ENCODE measurements at regions of chr12 and their contacts with region 1.

Region 1: GRCh38 chr12:62603061-62603810 is 136.6 kb downstream of the MON2 start:
- DNase-seq: peak; percentile 84 to 92 (median 84)
- H3K4me3 ChIP-seq: peak overlapping the region; percentile 54 to 86 (median 58)
- H3K4me3 Mint-ChIP-seq: peak overlapping the region; percentile 89 to 94
- H3K27ac ChIP-seq: peak overlapping the region; percentile 99
- H3K27ac Mint-ChIP-seq: peak overlapping the region; percentile 99 to 100 (median 99)
- H3K4me1 ChIP-seq: peaks cover 16 to 30% of the 10 kb centered on the region in 2 donors
- H3K4me1 Mint-ChIP-seq: peaks cover 37% of the 10 kb centered on the region
- H3K27me3 ChIP-seq: no peaks in the 10 kb centered on the region
- H3K27me3 Mint-ChIP-seq: peaks cover 0 to 2% (median 0%) of the 10 kb centered on the region in 3 donors
- CTCF ChIP-seq: peak; percentile 54

Region 2: GRCh38 chr12:62146318-62146717 is 456.9 kb before region 1 on chr12:
- intact Hi-C with region 1: no loop called
- DNase-seq: peak; percentile 64 to 75 (median 66)
- H3K4me3 ChIP-seq: no peak overlapping the region
- H3K4me3 Mint-ChIP-seq: no peak overlapping the region
- H3K27ac ChIP-seq: peak overlapping the region in 1 of 2 donors; percentile 21
- H3K27ac Mint-ChIP-seq: peak overlapping the region in 4 of 7 donors; percentile 51 to 81 (median 70)
- H3K4me1 ChIP-seq: peaks cover 11 to 12% of the 10 kb centered on the region in 2 donors
- H3K4me1 Mint-ChIP-seq: peaks cover 18% of the 10 kb centered on the region
- H3K27me3 ChIP-seq: no peaks in the 10 kb centered on the region
- H3K27me3 Mint-ChIP-seq: no peaks in the 10 kb centered on the region
- CTCF ChIP-seq: no peak

Region 3: DNA sequence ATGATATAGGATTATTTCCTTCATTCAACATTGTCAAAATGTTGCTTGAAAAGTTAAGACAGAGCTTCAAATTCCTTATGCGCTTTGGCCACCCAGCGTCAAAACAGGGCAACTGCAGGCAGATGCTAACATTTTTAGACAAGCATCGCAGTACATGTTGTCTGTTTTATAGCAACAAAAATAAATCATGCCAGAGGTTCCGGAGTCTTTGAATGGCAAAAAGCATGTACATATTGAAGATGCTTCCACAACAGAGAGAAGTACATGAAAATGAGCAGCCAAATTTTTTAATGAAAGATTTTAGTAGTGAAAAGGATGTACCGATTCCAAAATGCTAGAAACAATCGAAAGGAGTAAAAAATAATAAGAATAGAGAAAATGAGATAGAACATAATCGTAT is 392.8 kb before region 1 on chr12:
- intact Hi-C with region 1: loop called in 1 of 2 experiments (anchors 5 kb)
- DNase-seq: peak; percentile 50 to 61 (median 58)
- H3K4me3 ChIP-seq: peak overlapping the region in 1 of 3 experiments; percentile 52
- H3K4me3 Mint-ChIP-seq: peak overlapping the region in 1 of 2 donors; percentile 35
- H3K27ac ChIP-seq: peak overlapping the region in 1 of 2 donors; percentile 73
- H3K27ac Mint-ChIP-seq: peak overlapping the region; percentile 23 to 96 (median 93)
- H3K4me1 ChIP-seq: peaks cover 42 to 53% of the 10 kb centered on the region in 2 donors
- H3K4me1 Mint-ChIP-seq: peaks cover 53% of the 10 kb centered on the region
- H3K27me3 ChIP-seq: no peaks in the 10 kb centered on the region
- H3K27me3 Mint-ChIP-seq: no peaks in the 10 kb centered on the region
- CTCF ChIP-seq: peak; percentile 88

Region 4: DNA sequence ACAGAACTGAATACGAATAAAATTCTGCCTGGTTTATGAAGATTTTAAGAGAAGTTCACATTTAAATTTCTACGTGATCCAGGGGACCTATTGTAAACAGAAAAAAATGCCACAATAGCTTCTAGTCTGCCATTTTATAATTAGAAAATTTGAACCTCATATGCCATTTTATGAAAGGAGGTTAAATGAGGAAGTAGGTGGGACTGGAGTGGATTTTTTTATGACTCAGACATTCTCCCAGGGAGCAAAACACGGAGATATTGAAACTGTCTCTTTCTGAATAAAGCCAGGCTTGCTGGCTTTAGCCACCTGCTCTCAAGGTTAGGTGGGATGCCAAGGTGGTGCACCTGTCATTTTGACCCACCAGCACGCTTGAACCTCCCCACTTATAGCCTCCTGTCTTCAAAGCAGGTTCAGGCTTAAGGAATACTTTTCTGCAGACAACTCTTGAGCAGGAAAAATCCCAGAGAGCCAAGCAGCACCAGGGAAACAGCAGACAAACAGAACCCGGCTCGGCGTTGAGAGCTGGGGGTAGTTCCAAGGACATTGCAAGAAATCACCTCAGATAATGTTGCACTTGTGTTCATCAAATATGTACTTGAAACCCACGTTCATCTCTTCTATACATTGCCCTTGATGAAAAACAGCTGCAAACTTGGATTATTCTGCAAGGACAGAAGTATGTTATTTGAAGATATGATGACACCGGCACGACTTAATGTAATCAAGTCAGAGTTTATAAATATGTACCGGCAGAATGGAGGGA is 128.0 kb after region 1 on chr12:
- intact Hi-C with region 1: loop called in 1 of 2 experiments (anchors 5 kb)
- DNase-seq: peak; percentile 60 to 84 (median 80)
- H3K4me3 ChIP-seq: no peak overlapping the region
- H3K4me3 Mint-ChIP-seq: peak overlapping the region; percentile 43 to 59
- H3K27ac ChIP-seq: peak overlapping the region; percentile 10 to 71
- H3K27ac Mint-ChIP-seq: peak overlapping the region; percentile 78 to 96 (median 92)
- H3K4me1 ChIP-seq: peaks cover 44 to 61% of the 10 kb centered on the region in 2 donors
- H3K4me1 Mint-ChIP-seq: peaks cover 61% of the 10 kb centered on the region
- H3K27me3 ChIP-seq: no peaks in the 10 kb centered on the region
- H3K27me3 Mint-ChIP-seq: peaks cover 0 to 2% (median 0%) of the 10 kb centered on the region in 3 donors
- CTCF ChIP-seq: no peak

Region 5: DNA sequence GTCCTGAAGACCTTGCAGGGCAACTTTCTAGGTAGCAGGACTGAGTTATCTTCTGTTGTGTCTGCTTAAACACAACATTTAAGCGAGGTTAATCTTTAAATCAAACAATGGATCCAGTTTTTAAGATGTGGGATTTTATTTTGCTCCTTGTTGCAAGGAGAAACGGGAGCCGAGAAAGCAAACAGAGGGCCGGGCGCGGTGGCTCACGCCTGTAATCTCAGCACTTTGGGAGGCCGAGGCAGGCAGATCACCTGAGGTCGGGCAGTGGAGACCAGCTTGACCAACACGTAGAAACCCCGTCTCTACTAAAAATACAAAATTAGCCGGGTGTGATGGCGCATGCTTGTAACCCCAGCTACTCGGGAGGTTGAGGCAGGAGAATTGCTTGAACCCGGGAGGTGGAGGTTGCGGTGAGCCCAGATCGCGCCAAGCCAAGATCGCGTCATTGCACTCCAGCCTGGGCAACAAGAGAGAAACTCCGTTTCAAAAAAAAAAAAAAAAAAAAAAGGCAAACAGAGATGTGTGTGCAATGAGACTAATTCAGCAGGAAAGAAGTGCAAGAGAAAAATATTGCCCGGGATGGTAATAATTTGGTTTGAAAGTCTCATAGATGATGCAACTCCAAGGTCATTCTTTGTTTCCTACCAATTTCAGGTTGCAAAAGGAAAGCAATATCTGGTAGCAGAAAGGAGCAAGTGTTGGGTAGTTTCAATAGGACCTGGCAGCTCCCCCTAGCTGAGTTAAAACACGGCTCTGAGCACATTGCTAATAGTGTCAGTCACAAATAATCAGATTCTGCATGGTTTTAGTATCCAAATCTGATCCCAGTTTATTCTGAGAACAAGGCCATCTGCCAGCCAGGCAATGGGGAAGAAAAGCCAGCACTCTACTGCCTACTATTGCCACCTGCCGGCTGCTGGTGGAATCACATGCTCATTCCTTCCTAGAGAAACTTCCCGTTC is 190.3 kb after region 1 on chr12:
- intact Hi-C with region 1: loop called in 1 of 2 experiments (anchors 5 kb)
- DNase-seq: peak; percentile 66 to 85 (median 70)
- H3K4me3 ChIP-seq: no peak overlapping the region
- H3K4me3 Mint-ChIP-seq: no peak overlapping the region
- H3K27ac ChIP-seq: no peak overlapping the region
- H3K27ac Mint-ChIP-seq: no peak overlapping the region
- H3K4me1 ChIP-seq: peaks cover 13 to 20% of the 10 kb centered on the region in 2 donors
- H3K4me1 Mint-ChIP-seq: peaks cover 25% of the 10 kb centered on the region
- H3K27me3 ChIP-seq: no peaks in the 10 kb centered on the region
- H3K27me3 Mint-ChIP-seq: peaks cover 0 to 2% (median 0%) of the 10 kb centered on the region in 3 donors
- CTCF ChIP-seq: peak; percentile 92